Heart right ventricle (tissue), 16 donors: ENCODE measurements at regions of chr14 and their contacts with region 1.

Region 1: GRCh38 chr14:103679351-103679750 is 35.9 kb downstream of the XRCC3 start:
- DNase-seq: peak in 1 of 2 donors; percentile 42
- ATAC-seq: peak in 7 of 8 donors; percentile 46 to 82 (median 77)
- H3K4me3 ChIP-seq: no peak overlapping the region
- H3K27ac ChIP-seq: peak overlapping the region in 3 of 10 donors; percentile 14 to 45 (median 31)
- H3K4me1 ChIP-seq: peaks cover 0 to 47% (median 16%) of the 10 kb centered on the region in 9 donors
- H3K27me3 ChIP-seq: no peaks in the 10 kb centered on the region
- CTCF ChIP-seq: peak in 7 of 9 donors; percentile 24 to 60 (median 50)

Region 2: DNA sequence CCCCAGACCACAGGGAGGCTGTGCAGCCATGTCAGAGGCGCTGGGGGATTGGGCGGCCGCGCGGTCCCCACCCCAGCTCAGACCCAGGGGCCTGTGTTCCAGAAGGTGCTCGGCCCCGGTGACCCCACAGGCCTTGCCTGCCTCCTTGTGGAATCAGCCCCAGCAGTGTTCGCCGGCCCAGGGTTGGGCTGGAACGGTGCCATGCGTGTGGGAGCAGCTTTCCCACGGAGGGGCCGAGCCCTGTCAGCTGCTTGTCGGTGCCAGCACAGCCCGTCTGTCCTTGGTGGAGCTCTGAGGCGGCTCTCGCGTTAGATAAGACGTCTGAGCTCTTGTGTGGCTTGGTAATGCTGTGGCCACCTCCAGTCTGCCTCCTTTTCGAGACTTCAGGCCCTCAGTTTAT is 44.8 kb after region 1 on chr14:
- intact Hi-C with region 1: loop called in 1 of 10 experiments (anchors 5 kb)
- DNase-seq: peak; percentile 69 to 81
- ATAC-seq: peak; percentile 59 to 77 (median 72)
- H3K4me3 ChIP-seq: no peak overlapping the region
- H3K27ac ChIP-seq: peak overlapping the region; percentile 8 to 79 (median 58)
- H3K4me1 ChIP-seq: peaks cover 19 to 60% (median 46%) of the 10 kb centered on the region in 9 donors
- H3K27me3 ChIP-seq: no peaks in the 10 kb centered on the region
- CTCF ChIP-seq: peak in 7 of 9 donors; percentile 12 to 45 (median 33)